K562 (cell line): ENCODE measurements at regions of chr12 and their contacts with region 1.

Region 1: GRCh38 chr12:31117203-31118011 is 43.7 kb downstream of the DDX11 start:
- DNase-seq: peak; percentile 71 to 80 (median 72)
- ATAC-seq: peak; percentile 94
- H3K4me3 ChIP-seq: peak overlapping the region; percentile 38
- H3K27ac ChIP-seq: no peak overlapping the region
- H3K4me1 ChIP-seq: peaks cover 0 to 30% of the 10 kb centered on the region in 2 experiments; a peak in 2 of 5 replicates
- H3K27me3 ChIP-seq: no peaks in the 10 kb centered on the region
- CTCF ChIP-seq: peak; percentile 68 to 78 (median 70)
- EP300 ChIP-seq: no peak
- POLR2A ChIP-seq: no peak
- RAD21 ChIP-seq: peak; percentile 24 to 60; a peak in 2 of 4 replicates

Region 2: GRCh38 chr12:31215518-31216232 is 98.3 kb after region 1 on chr12:
- CTCF ChIA-PET with region 1: interaction called, 3 read pairs
- POLR2A ChIA-PET with region 1: no interaction called
- in situ Hi-C with region 1: loop called (anchors 5 kb)
- intact Hi-C with region 1: no loop called
- DNase-seq: no peak
- ATAC-seq: no peak
- H3K4me3 ChIP-seq: no peak overlapping the region
- H3K27ac ChIP-seq: no peak overlapping the region
- H3K4me1 ChIP-seq: no peaks in the 10 kb centered on the region
- H3K27me3 ChIP-seq: peaks cover 10 to 53% of the 10 kb centered on the region in 2 experiments; a peak in 4 of 5 replicates
- CTCF ChIP-seq: no peak
- EP300 ChIP-seq: no peak
- POLR2A ChIP-seq: no peak
- RAD21 ChIP-seq: no peak

Region 3: GRCh38 chr12:31267966-31268365 is 150.6 kb after region 1 on chr12:
- CTCF ChIA-PET with region 1: interaction called, 11 read pairs
- POLR2A ChIA-PET with region 1: no interaction called
- in situ Hi-C with region 1: no loop called
- intact Hi-C with region 1: no loop called
- DNase-seq: no peak
- ATAC-seq: no peak
- H3K4me3 ChIP-seq: no peak overlapping the region
- H3K27ac ChIP-seq: no peak overlapping the region
- H3K4me1 ChIP-seq: no peaks in the 10 kb centered on the region
- H3K27me3 ChIP-seq: no peaks in the 10 kb centered on the region
- CTCF ChIP-seq: no peak
- EP300 ChIP-seq: no peak
- POLR2A ChIP-seq: no peak
- RAD21 ChIP-seq: no peak